SK-N-SH (cell line): ENCODE measurements at regions of chr3 and their contacts with region 1.

Region 1: GRCh38 chr3:178443634-178444033 is 92.6 kb upstream of the KCNMB2 start:
- DNase-seq: no peak
- H3K4me3 ChIP-seq: no peak overlapping the region
- H3K27ac ChIP-seq: no peak overlapping the region
- H3K4me1 ChIP-seq: no peaks in the 10 kb centered on the region
- H3K27me3 ChIP-seq: no peaks in the 10 kb centered on the region
- CTCF ChIP-seq: no peak
- EP300 ChIP-seq: no peak
- RAD21 ChIP-seq: peak; percentile 36; the same call in 1 of the 2 replicates

Region 2: GRCh38 chr3:178966299-178967176 is 522.9 kb after region 1 on chr3:
- CTCF ChIA-PET with region 1: interaction called, 15 read pairs
- POLR2A ChIA-PET with region 1: no interaction called
- DNase-seq: peak; percentile 19
- H3K4me3 ChIP-seq: peak overlapping the region in 1 of 2 experiments; percentile 13; a peak in 1 of 4 replicates
- H3K27ac ChIP-seq: no peak overlapping the region
- H3K4me1 ChIP-seq: peaks cover 0 to 14% of the 10 kb centered on the region in 2 experiments; a peak in 2 of 4 replicates
- H3K27me3 ChIP-seq: no peaks in the 10 kb centered on the region
- CTCF ChIP-seq: peak; percentile 69
- EP300 ChIP-seq: no peak
- RAD21 ChIP-seq: peak; percentile 85